ENCODE measurements at regions of chr1 and their contacts with region 1.

Region 1: DNA sequence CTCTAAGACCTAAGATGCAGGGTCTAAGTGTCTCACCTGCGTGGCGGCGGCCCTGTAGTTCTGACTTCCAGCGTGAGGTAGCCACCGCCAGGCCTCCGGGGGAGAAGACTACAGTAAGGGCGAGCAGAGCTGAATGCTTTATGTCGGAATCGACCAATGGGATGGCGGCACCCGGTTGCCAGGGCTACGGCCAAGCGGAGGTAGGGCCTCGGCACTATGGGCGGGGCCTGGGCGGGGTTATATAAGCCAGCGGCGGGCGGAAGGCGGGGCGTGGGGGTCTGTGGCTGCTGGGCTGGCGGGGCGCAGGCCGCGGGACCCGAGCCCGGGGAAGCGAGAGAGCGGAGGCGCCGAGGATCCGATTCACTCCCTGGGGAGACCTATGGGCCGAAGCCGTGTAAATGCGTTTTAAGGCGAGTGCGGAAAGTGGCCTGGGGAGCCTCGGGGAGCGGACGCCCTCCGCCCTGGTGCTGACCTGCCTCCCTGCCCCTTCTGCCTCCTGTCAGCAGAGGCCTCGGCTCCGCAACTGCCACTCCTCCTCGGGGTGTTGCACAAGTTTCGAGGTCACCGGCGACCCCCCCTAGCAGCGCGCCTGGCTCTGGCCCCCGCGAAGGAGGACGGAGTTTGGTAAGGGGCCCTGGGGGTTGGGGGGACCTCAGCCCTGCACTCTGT is at the start of gene AZIN2:
- DNase-seq: peak; percentile 93
- H3K4me3 ChIP-seq: peak within 1 kb of the TSS; percentile 74 to 88 (median 77)
- H3K27ac ChIP-seq: peak within 1 kb of the TSS; percentile 42
- H3K4me1 ChIP-seq: peaks cover 18% of the 10 kb centered on the region
- H3K27me3 ChIP-seq: no peaks in the 10 kb centered on the region
- CTCF ChIP-seq: no peak
- total RNA-seq, gene AZIN2: 8.3 to 12.5 TPM

Region 2: GRCh38 chr1:32817159-32817814 is 263.7 kb before region 1 on chr1 and contains the starts of genes S100PBP and YARS1:
- CTCF ChIA-PET with region 1: no interaction called
- dilution Hi-C with region 1: no loop called
- in situ Hi-C with region 1: no loop called
- intact Hi-C with region 1: loop called (anchors 2 kb)
- DNase-seq: peak; percentile 98
- H3K4me3 ChIP-seq: peak within 1 kb of the TSS; percentile 91 to 96 (median 91)
- H3K27ac ChIP-seq: peak within 1 kb of the TSS; percentile 98
- H3K4me1 ChIP-seq: peaks cover 23% of the 10 kb centered on the region
- H3K27me3 ChIP-seq: no peaks in the 10 kb centered on the region
- CTCF ChIP-seq: no peak
- total RNA-seq, gene S100PBP: 31.2 to 41.7 TPM
- total RNA-seq, gene YARS1: 165 to 219 TPM

Region 3: DNA sequence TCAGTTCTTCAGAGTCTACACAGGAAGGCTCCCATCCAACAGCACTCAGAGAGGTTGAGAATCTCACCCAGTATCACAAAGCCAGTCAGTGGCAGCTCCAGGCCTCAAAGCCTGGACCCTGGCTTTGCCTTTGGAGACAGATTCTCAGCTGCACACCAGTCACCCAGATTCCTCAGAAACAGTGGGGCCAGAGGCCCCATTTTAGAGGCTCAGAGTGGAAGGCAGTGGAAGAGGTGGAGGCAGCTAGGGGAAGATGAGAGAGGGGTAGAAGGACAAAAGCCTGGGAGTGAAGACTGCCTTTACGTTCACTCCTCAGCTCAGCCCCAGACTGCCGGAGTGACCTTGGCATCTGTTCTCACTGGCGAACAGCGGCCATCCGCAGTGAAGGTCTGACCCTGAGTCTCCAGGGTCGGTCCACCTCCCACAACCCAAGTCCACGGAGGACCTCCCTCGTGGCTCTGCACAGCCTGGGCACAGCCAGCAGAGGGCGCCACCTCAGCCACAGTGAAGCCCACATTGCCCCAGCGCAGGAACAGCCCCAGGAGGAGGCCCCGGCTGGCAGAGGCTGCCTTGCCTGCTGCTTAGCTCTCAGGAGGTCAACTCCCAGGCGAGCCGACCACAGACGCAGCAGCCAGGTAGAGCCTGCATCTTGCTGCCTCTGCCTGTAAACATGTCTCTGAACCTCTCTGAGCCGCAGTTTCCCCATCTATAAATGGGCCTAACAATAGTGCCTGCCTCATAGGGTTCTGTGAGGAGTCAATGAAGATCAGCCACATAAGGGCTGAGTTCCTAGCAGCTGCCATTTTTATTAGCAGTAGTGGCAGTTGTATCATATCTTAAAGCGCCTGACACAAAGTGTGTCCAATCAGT is 204.4 kb before region 1 on chr1:
- CTCF ChIA-PET with region 1: no interaction called
- dilution Hi-C with region 1: loop called (anchors 5 kb)
- in situ Hi-C with region 1: loop called in 1 of 2 experiments (anchors 10 kb)
- intact Hi-C with region 1: loop called (anchors 1 kb)
- DNase-seq: no peak
- H3K4me3 ChIP-seq: no peak overlapping the region
- H3K27ac ChIP-seq: no peak overlapping the region
- H3K4me1 ChIP-seq: peaks cover 3% of the 10 kb centered on the region
- H3K27me3 ChIP-seq: peaks cover 1% of the 10 kb centered on the region
- CTCF ChIP-seq: peak; percentile 87 to 92

Region 4: DNA sequence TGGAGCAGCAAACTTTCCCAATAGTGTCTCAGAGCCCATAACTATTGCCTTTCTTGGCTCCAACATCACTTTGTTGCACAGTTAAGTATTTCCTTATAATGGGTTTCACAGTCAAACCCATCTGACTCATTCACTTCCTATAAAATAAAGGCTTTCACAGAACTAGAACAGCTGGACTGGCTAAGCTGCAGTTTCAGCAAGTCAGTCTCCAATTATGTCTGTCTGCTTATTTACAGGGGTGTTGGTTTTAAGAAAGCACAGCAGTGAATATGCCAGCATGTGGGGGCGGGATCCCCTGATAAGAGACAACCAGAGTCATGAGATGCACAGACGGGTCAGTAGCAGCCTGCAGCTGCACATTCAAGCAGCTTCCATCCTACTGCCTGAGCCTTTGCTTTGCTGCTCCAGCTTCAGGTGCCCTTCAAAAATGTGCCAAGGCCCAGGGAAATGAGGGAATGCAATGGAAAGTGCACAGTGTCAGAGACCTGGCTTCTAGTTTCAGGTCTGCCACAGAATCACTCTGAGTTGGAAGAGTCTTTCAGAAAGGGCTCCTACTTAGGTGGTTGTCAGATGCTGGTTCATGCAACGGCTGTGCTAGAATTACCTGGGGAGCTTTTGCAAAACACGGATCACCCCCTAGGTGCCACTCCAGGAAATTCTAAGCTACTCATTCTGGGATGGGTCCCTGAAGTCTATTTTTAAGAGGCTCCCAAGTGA is 141.2 kb before region 1 on chr1:
- CTCF ChIA-PET with region 1: no interaction called
- dilution Hi-C with region 1: no loop called
- in situ Hi-C with region 1: loop called in 1 of 2 experiments (anchors 25 kb)
- intact Hi-C with region 1: no loop called
- DNase-seq: peak; percentile 94
- H3K4me3 ChIP-seq: no peak overlapping the region
- H3K27ac ChIP-seq: peak overlapping the region; percentile 63
- H3K4me1 ChIP-seq: peaks cover 30% of the 10 kb centered on the region
- H3K27me3 ChIP-seq: no peaks in the 10 kb centered on the region
- CTCF ChIP-seq: no peak

Region 5: DNA sequence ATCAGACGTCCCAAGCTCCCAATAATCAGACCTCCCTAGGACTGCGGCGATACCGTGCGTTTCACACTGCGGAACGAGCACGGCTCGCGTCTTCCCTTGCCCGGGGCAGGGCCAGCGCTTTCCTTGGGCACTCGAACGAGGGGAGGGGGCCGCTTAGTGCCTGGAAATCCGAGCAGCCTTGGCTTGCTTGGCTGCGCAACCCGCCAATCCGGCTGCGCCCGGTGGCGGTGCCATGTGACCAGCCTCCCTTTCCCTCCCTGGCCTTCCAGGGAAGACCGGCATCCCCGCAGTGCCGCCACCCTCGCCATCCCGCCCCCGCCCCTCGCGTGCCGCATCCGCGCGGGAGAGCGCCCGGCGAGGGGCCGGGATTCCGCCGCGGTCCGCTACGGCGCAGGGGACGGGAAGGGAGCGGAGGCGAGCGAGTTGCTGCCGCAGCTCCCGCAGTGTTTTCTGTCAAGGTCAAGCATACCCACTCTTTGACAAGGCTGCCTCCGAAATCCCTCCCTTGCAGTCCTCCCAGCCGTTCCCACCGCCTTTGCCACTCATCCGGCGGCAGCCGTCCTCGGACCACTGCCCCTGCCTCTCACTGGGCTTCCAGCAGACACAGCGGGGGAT is 108.1 kb before region 1 on chr1:
- CTCF ChIA-PET with region 1: no interaction called
- dilution Hi-C with region 1: no loop called
- in situ Hi-C with region 1: no loop called
- intact Hi-C with region 1: no loop called
- DNase-seq: no peak
- H3K4me3 ChIP-seq: peak overlapping the region; percentile 44 to 53 (median 51)
- H3K27ac ChIP-seq: no peak overlapping the region
- H3K4me1 ChIP-seq: peaks cover 28% of the 10 kb centered on the region
- H3K27me3 ChIP-seq: no peaks in the 10 kb centered on the region
- CTCF ChIP-seq: no peak

Region 6: DNA sequence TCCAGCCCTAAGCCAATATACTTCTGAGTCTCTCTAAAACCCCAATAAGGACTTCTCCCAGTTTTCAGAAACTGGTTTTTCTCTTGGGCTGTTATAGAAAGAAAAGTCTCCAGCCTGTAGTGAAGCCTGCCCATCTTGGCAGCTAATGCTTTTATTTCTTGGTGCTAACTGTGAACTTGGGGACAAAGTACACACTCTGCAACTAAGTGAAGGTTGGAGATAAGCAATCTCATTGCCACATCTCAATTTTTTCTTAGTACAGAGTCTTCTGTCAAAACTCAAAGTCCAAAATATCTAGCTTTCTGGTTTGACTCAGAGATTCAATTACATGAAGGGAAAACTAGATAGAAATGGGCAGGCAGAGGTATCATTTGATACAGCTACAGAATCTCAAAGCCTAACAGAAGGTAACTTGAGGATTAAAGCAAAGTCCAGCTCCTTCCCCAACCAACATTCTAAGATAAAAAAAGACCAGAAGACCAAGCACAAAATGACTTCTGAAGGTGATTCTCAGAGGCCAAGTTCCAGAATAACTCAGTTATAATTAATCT is 58.3 kb before region 1 on chr1:
- CTCF ChIA-PET with region 1: no interaction called
- dilution Hi-C with region 1: loop called (anchors 5 kb)
- in situ Hi-C with region 1: no loop called
- intact Hi-C with region 1: no loop called
- DNase-seq: no peak
- H3K4me3 ChIP-seq: no peak overlapping the region
- H3K27ac ChIP-seq: no peak overlapping the region
- H3K4me1 ChIP-seq: peaks cover 6% of the 10 kb centered on the region
- H3K27me3 ChIP-seq: no peaks in the 10 kb centered on the region
- CTCF ChIP-seq: no peak

Region 7: DNA sequence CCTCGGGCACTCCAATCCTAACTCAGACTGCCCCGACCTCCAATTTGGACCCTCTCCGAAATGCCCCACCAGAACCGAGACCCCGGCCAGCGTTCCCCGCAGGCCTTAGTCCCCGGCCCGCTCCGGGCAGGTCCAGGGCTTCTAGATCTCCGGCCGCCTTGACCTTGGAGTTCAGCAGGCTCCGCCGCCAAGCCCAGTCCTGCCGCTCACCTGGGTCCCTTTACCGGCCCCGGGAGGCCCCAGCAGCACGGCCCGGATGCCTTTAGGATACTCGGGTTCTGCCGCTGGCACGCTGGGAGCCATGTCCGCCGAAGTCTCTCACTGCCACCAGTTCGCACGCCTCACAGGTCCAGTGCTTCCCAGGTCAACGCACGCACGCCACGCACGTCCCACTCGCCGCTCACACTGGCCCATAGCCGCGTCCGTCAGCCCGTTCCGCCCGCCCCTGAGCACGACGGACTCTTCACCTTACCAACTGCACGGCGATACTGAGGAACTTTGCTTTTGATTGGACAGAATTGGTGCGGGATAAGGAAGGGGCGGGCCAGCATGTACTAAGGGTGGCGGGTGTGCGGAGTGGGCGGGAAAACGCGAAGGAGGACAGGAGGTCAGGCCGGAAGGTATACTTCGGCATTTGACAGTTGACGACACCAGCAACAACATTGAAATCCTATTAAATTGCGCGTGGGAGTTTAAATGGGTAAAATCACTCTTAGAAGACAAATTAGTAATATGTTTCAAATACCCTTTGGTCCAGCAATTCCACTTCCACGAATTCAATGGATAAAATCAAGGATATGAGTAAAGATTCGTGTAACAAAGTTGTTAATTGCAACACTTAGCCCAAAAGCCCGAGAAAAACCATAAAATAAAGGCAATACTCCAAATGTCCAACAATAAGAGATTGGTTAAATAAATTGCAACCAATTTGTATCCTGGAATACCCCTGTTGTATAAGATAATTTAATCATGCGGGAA is 44.2 kb before region 1 on chr1 and contains the start of gene AK2:
- CTCF ChIA-PET with region 1: interaction called, 4 read pairs
- dilution Hi-C with region 1: no loop called
- in situ Hi-C with region 1: no loop called
- intact Hi-C with region 1: loop called (anchors 2 kb)
- DNase-seq: peak; percentile 98
- H3K4me3 ChIP-seq: peak within 1 kb of the TSS; percentile 72 to 96 (median 78)
- H3K27ac ChIP-seq: peak within 1 kb of the TSS; percentile 92
- H3K4me1 ChIP-seq: peaks cover 12% of the 10 kb centered on the region
- H3K27me3 ChIP-seq: no peaks in the 10 kb centered on the region
- CTCF ChIP-seq: no peak
- total RNA-seq, gene AK2: 157 to 217 TPM

Region 8: DNA sequence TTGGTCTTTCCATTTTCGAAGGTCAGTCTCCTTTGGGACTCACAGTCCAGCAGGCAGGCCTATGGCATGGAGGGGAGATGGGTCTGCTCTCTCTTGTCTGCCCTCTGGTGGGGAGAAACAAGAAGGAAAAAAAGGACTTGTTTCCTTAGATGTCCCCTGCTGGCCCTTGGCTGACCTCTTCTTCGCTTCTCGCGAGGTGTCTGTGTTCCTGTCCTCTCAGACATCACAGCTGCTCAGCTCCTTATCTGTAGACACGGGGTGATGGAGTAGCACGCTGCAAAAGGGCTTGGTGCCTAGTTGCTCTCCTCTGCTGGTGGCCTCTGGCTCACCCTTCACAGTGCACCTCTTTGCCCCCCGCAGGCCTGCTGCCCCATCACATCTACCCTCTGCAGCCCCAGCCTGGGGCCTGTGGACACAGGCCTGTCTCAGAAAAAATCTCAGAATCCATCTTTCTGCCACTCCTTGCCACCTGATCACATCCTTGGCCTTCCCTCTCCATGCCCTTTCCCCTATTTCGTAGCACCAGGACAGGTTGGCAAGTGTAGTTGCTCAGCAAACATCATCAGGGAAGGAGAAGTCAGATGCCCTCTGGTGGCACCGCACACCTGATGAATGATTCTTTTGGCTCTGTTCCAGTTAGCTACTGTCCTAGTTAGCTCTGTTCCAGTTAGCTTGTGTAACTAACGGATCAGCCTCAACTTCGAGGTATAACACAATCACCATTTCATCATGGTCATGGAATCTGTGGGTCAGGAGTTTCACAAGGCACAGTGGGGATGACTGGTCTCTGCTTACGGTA is 25.6 kb before region 1 on chr1:
- CTCF ChIA-PET with region 1: no interaction called
- dilution Hi-C with region 1: no loop called
- in situ Hi-C with region 1: no loop called
- intact Hi-C with region 1: loop called (anchors 2 kb)
- DNase-seq: peak; percentile 64
- H3K4me3 ChIP-seq: no peak overlapping the region
- H3K27ac ChIP-seq: no peak overlapping the region
- H3K4me1 ChIP-seq: peaks cover 13% of the 10 kb centered on the region
- H3K27me3 ChIP-seq: no peaks in the 10 kb centered on the region
- CTCF ChIP-seq: peak; percentile 50 to 66